ENCODE measurements at regions of chrX and their contacts with region 1.

Region 1: GRCh38 chrX:133005066-133005465 is 46.6 kb upstream of the HS6ST2 start:
- H3K4me3 ChIP-seq: no peak overlapping the region
- H3K27ac ChIP-seq: no peak overlapping the region
- H3K4me1 ChIP-seq: no peaks in the 10 kb centered on the region
- CTCF ChIP-seq: peak; percentile 63

Region 2: GRCh38 chrX:132909643-132910042 is 95.4 kb before region 1 on chrX:
- CTCF ChIA-PET with region 1: no interaction called
- POLR2A ChIA-PET with region 1: no interaction called
- H3K4me3 ChIP-seq: no peak overlapping the region
- H3K27ac ChIP-seq: no peak overlapping the region
- H3K4me1 ChIP-seq: peaks cover 7% of the 10 kb centered on the region; the same call in 1 of the 2 replicates
- CTCF ChIP-seq: no peak

Region 3: GRCh38 chrX:132968296-132968949 is 36.6 kb before region 1 on chrX:
- CTCF ChIA-PET with region 1: interaction called, 16 read pairs
- POLR2A ChIA-PET with region 1: no interaction called
- H3K4me3 ChIP-seq: no peak overlapping the region
- H3K27ac ChIP-seq: no peak overlapping the region
- H3K4me1 ChIP-seq: peaks cover 6% of the 10 kb centered on the region; the same call in 1 of the 2 replicates
- CTCF ChIP-seq: no peak

Region 4: DNA sequence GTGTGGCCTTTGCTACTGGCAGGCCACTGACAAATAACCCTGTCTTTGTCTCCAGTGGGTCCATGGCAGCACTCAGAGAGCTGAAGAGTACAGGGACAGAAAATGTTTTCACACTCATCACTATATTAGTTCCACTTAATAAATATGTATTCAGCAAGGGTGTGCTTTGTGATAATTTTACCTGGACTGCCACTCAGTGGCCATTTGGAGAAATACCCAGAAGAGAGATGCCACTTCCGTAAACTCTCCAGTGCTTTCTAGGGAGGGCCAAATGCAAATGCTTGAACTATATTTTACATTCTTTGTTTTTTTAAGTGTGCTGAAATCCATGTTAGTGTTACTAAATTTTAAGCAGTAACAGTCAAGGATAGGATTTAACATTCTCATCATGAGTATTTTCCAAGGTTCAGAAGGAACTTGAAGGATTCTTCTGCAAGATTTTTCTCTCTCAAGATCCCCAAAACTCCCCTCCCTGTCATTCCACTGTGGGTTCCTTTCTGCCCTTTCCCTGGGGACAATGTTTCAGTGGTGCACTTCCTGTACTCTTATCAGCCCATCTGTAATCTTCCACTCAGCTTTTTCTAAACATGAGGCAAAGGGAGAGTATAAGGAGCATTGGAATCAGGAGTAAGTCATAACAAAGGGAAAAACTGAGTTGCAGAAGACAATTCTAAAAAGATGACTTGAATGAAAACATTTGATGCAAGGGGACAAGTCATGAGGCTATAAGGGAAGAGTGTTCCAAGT is 167.1 kb after region 1 on chrX:
- CTCF ChIA-PET with region 1: interaction called, 31 read pairs
- POLR2A ChIA-PET with region 1: no interaction called
- H3K4me3 ChIP-seq: no peak overlapping the region
- H3K27ac ChIP-seq: no peak overlapping the region
- H3K4me1 ChIP-seq: no peaks in the 10 kb centered on the region
- CTCF ChIP-seq: peak; percentile 47; the same call in 1 of the 2 replicates

Region 5: GRCh38 chrX:133563705-133564104 is 558.6 kb after region 1 on chrX:
- CTCF ChIA-PET with region 1: no interaction called
- POLR2A ChIA-PET with region 1: no interaction called
- H3K4me3 ChIP-seq: no peak overlapping the region
- H3K27ac ChIP-seq: no peak overlapping the region
- H3K4me1 ChIP-seq: no peaks in the 10 kb centered on the region
- CTCF ChIP-seq: no peak

Measured in HEK293 (cell line).